ENCODE measurements at regions of chr3 and their contacts with region 1.

Region 1: DNA sequence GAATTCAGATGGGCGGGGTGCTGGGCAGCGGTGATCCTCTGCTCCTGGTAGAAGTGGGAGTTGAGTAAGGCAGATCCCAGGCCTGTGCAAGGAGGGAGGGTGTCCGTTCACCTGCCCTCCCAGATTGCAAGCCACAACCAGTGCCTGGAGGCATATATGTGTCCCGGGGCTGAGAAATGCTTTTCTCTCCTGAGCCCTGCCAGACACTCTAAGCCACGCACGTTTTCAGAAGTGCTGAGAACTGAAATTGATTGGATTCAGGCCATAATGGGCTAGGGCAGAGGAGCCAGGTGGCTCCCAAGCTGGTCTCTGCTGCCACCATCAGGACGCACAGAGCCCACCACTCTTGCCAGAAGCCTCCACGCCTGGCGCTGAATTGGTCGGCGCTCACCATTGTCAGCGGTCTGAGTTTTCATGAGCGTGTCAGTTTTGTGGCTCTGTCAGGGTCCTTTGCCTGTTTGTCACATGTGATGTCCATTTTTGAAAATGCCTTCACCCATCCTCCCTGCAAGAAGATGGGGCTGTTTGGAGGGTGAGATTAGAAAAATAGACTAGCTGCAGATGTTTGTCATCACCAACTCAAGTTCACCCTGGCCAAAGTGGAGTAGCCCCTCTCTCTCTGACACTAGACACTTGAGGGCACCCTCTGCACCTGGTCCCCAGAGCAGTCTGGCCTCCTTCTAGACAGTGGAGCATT is 15.4 kb upstream of the BFSP2 start:
- H3K4me3 ChIP-seq: no peak overlapping the region
- H3K27ac ChIP-seq: no peak overlapping the region
- H3K4me1 ChIP-seq: no peaks in the 10 kb centered on the region
- CTCF ChIP-seq: peak; percentile 73

Region 2: GRCh38 chr3:132730891-132731580 is 653.4 kb before region 1 on chr3:
- CTCF ChIA-PET with region 1: interaction called, 31 read pairs
- POLR2A ChIA-PET with region 1: no interaction called
- H3K4me3 ChIP-seq: no peak overlapping the region
- H3K27ac ChIP-seq: no peak overlapping the region
- H3K4me1 ChIP-seq: no peaks in the 10 kb centered on the region
- CTCF ChIP-seq: peak; percentile 43; the same call in 1 of the 2 replicates

Region 3: GRCh38 chr3:133663569-133664313 is 279.3 kb after region 1 on chr3:
- CTCF ChIA-PET with region 1: no interaction called
- POLR2A ChIA-PET with region 1: no interaction called
- H3K4me3 ChIP-seq: no peak overlapping the region
- H3K27ac ChIP-seq: no peak overlapping the region
- H3K4me1 ChIP-seq: peaks cover 5% of the 10 kb centered on the region
- CTCF ChIP-seq: no peak; the same call in 1 of the 2 replicates